Activated CD8-positive, alpha-beta memory T cell treated with anti-CD3 and anti-CD28 coated beads, Interleukin-2, amount 10 ng/mL, durations not matched to agents 7 days and 5 days (primary cell): ENCODE measurements at regions of chr14 and their contacts with region 1.

Region 1: GRCh38 chr14:89720741-89721315 is 233.7 kb downstream of the EFCAB11 start:
- DNase-seq: peak; percentile 91
- ATAC-seq: peak; percentile 84
- H3K4me3 Mint-ChIP-seq: peak overlapping the region; percentile 13
- H3K27ac Mint-ChIP-seq: peak overlapping the region; percentile 91
- H3K4me1 Mint-ChIP-seq: peaks cover 62% of the 10 kb centered on the region
- H3K27me3 Mint-ChIP-seq: no peaks in the 10 kb centered on the region

Region 2: DNA sequence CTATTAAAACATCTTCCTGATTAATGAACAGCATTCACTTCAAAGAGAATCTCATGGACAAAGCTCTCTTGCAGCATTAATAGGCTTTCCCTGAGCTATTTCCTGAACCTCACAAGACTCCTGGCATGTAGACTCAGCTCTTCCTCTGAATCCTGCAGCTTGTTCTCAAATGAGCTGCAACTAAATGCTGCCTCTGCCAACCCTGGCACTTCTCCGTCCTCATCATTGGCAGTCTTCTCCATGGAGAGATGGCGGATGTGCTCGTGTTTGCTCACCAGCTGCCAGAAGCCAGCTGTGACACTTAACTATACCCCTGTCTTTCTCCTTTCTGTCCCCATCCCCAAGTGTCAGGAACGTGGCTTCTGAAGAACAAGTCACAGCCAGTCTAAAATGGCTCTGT is 535.9 kb before region 1 on chr14:
- CTCF ChIA-PET with region 1: no interaction called
- DNase-seq: no peak
- ATAC-seq: no peak
- H3K4me3 Mint-ChIP-seq: no peak overlapping the region
- H3K27ac Mint-ChIP-seq: no peak overlapping the region
- H3K4me1 Mint-ChIP-seq: no peaks in the 10 kb centered on the region
- H3K27me3 Mint-ChIP-seq: no peaks in the 10 kb centered on the region

Region 3: DNA sequence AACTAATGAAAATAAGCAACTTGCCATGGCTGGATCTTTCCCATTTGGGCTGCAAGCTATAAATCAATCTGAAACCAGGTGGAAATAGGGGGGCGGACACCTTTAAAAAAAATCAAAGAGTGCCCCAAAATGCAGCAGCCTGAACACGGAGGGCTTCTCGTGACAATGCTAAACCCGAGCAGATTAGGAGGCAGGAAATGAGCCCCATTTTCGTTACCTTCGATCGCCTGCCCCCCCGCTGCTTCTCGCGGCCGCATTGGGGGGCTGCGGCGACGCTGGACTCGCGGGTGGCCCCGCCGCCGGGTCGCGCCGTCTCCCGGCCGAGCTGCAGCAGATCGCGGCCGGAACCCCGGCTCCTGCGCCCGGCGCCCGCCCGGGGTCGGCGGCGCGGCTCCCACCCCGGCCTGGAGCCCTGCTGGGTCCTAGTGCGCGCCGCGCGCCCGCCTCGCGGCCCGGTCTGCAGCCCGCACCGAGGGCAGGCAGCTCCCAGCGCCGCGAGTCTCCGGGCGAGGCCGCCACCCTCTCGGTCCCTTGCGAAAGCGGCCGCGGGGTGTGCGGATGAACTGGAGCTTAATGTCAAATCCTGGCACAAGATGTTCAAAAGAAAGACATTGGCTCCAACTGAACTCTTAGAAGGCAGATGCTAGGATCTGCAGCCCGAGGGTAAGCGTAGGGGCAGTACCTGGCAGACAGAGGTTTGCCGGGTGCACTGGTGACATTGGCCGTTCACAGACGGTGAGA is 101.8 kb before region 1 on chr14:
- CTCF ChIA-PET with region 1: interaction called, 15 read pairs
- DNase-seq: peak; percentile 82
- ATAC-seq: peak; percentile 71
- H3K4me3 Mint-ChIP-seq: peak overlapping the region; percentile 91
- H3K27ac Mint-ChIP-seq: peak overlapping the region; percentile 94
- H3K4me1 Mint-ChIP-seq: peaks cover 62% of the 10 kb centered on the region
- H3K27me3 Mint-ChIP-seq: no peaks in the 10 kb centered on the region

Region 4: DNA sequence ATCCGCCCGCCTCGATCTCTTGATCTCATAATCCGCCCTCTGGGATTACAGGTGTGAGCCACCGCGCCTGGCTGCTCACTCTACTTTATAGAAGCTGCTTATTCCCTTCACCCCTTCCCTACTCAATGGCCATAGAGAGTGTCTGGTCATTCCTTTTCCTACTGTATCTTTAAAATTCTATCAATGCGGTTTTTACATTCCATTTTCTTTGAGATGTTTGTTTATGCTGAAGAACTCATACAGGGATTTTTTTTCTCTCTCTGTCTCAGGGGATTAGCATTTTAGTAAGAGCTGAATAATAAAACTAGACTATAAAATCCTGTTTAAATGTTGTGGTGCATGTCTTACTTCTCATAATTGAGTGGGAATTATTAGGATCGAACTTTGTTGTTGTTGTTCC is 85.2 kb before region 1 on chr14:
- CTCF ChIA-PET with region 1: no interaction called
- DNase-seq: no peak
- ATAC-seq: no peak
- H3K4me3 Mint-ChIP-seq: no peak overlapping the region
- H3K27ac Mint-ChIP-seq: no peak overlapping the region
- H3K4me1 Mint-ChIP-seq: peaks cover 28% of the 10 kb centered on the region
- H3K27me3 Mint-ChIP-seq: no peaks in the 10 kb centered on the region

Region 5: GRCh38 chr14:89701211-89702043 is 19.4 kb before region 1 on chr14:
- CTCF ChIA-PET with region 1: interaction called, 10 read pairs
- DNase-seq: peak; percentile 88
- ATAC-seq: peak; percentile 91
- H3K4me3 Mint-ChIP-seq: peak overlapping the region; percentile 59
- H3K27ac Mint-ChIP-seq: peak overlapping the region; percentile 75
- H3K4me1 Mint-ChIP-seq: peaks cover 36% of the 10 kb centered on the region
- H3K27me3 Mint-ChIP-seq: no peaks in the 10 kb centered on the region

Region 6: GRCh38 chr14:89767861-89768268 is 47.0 kb after region 1 on chr14:
- CTCF ChIA-PET with region 1: interaction called, 10 read pairs
- DNase-seq: peak; percentile 79
- ATAC-seq: peak; percentile 95
- H3K4me3 Mint-ChIP-seq: no peak overlapping the region
- H3K27ac Mint-ChIP-seq: no peak overlapping the region
- H3K4me1 Mint-ChIP-seq: peaks cover 21% of the 10 kb centered on the region
- H3K27me3 Mint-ChIP-seq: peaks cover 12% of the 10 kb centered on the region